IMR-90 (cell line): ENCODE measurements at regions of chr10 and their contacts with region 1.

Region 1: GRCh38 chr10:77641788-77642397 is 4.3 kb upstream of the KCNMA1 start:
- DNase-seq: peak; percentile 83
- ATAC-seq: no peak
- H3K4me3 ChIP-seq: no peak overlapping the region
- H3K27ac ChIP-seq: no peak overlapping the region
- H3K4me1 ChIP-seq: no peaks in the 10 kb centered on the region; the same call in 1 of the 2 replicates
- H3K27me3 ChIP-seq: peaks cover 18% of the 10 kb centered on the region
- CTCF ChIP-seq: peak; percentile 88
- POLR2A ChIP-seq: no peak
- RAD21 ChIP-seq: peak; percentile 93

Region 2: GRCh38 chr10:77173615-77174461 is 468.1 kb before region 1 on chr10:
- CTCF ChIA-PET with region 1: interaction called, 11 read pairs
- POLR2A ChIA-PET with region 1: interaction called, 6 read pairs
- dilution Hi-C with region 1: no loop called
- in situ Hi-C with region 1: loop called (anchors 5 kb)
- intact Hi-C with region 1: loop called (anchors 1 kb)
- DNase-seq: peak; percentile 79
- ATAC-seq: peak; percentile 93
- H3K4me3 ChIP-seq: no peak overlapping the region
- H3K27ac ChIP-seq: no peak overlapping the region
- H3K4me1 ChIP-seq: no peaks in the 10 kb centered on the region; the same call in 1 of the 2 replicates
- H3K27me3 ChIP-seq: no peaks in the 10 kb centered on the region
- CTCF ChIP-seq: peak; percentile 96
- POLR2A ChIP-seq: 0 out of 2 replicates have a peak, but pooled peaks have one; percentile 36
- RAD21 ChIP-seq: peak; percentile 96

Region 3: DNA sequence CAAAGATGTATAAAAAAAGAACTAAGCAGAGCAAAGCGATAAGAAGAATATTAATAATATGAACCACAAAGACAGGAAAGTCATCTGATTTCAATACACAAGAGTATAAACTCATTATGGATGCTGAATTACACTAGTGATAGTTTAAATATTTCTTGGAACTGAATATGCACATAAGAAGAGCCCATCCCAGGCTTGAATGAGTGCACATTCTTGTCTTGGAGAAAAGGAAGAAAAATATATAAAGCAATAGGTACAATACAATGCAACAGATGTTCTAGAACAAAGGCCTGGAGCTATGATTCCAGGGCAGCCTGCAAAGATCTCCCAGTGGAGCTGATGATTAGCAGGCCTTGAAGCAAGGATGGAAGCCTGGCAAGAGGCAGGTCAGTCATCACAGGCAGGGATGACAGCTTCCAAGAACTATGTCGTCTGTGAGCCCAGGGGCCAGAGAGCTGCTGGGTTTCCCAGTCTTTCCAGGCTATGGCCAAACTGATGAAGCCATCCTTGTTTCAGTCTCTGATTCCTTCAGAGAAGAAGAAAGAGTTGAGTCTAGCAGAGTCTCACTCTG is 281.9 kb before region 1 on chr10:
- CTCF ChIA-PET with region 1: no interaction called
- POLR2A ChIA-PET with region 1: no interaction called
- dilution Hi-C with region 1: no loop called
- in situ Hi-C with region 1: no loop called
- intact Hi-C with region 1: no loop called
- DNase-seq: peak; percentile 52
- ATAC-seq: no peak
- H3K4me3 ChIP-seq: no peak overlapping the region
- H3K27ac ChIP-seq: no peak overlapping the region
- H3K4me1 ChIP-seq: peaks cover 14% of the 10 kb centered on the region
- H3K27me3 ChIP-seq: no peaks in the 10 kb centered on the region
- CTCF ChIP-seq: no peak
- POLR2A ChIP-seq: no peak
- RAD21 ChIP-seq: no peak

Region 4: DNA sequence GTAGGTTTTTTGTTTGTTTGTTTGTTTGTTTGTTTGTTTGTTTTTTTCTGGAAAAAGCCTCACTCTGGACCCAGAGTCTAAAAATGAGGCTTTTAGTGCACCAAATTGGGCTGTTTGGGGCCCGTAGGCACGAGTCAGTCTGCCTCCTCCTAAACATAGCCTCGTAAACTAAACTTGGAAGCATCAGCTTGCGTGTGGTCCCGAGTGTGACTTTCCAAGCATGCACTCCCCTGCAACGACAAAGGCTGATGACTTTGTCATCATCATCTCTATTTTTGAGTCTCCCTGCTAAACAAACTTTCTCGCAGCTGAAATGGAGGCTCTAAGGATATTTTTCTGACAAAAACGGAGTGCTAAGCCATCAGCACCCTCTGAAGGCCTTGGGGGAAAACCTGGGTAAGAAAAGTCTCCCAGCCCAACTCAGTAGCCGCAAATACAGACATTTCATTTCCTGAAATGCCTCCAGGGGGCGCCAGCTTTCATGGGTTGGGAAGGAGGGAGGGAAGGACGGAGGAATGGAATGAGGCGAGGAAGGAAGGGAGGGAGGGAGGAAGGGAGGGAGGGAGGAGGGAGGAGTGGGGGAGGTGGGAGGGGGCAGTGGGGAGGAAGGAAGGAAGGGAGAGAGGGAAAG is 250.2 kb before region 1 on chr10:
- CTCF ChIA-PET with region 1: no interaction called
- POLR2A ChIA-PET with region 1: no interaction called
- dilution Hi-C with region 1: no loop called
- in situ Hi-C with region 1: no loop called
- intact Hi-C with region 1: loop called (anchors 1 kb)
- DNase-seq: peak; percentile 87
- ATAC-seq: peak; percentile 61
- H3K4me3 ChIP-seq: no peak overlapping the region
- H3K27ac ChIP-seq: peak overlapping the region; percentile 64
- H3K4me1 ChIP-seq: peaks cover 26% of the 10 kb centered on the region
- H3K27me3 ChIP-seq: no peaks in the 10 kb centered on the region
- CTCF ChIP-seq: peak; percentile 77
- POLR2A ChIP-seq: no peak
- RAD21 ChIP-seq: peak; percentile 77

Region 5: GRCh38 chr10:77467422-77467963 is 174.4 kb before region 1 on chr10:
- CTCF ChIA-PET with region 1: no interaction called
- POLR2A ChIA-PET with region 1: no interaction called
- dilution Hi-C with region 1: no loop called
- in situ Hi-C with region 1: no loop called
- intact Hi-C with region 1: no loop called
- DNase-seq: no peak
- ATAC-seq: no peak
- H3K4me3 ChIP-seq: no peak overlapping the region
- H3K27ac ChIP-seq: no peak overlapping the region
- H3K4me1 ChIP-seq: no peaks in the 10 kb centered on the region
- H3K27me3 ChIP-seq: no peaks in the 10 kb centered on the region
- CTCF ChIP-seq: no peak
- POLR2A ChIP-seq: no peak
- RAD21 ChIP-seq: no peak

Region 6: GRCh38 chr10:77494327-77494726 is 147.6 kb before region 1 on chr10:
- CTCF ChIA-PET with region 1: no interaction called
- POLR2A ChIA-PET with region 1: no interaction called
- dilution Hi-C with region 1: no loop called
- in situ Hi-C with region 1: no loop called
- intact Hi-C with region 1: loop called (anchors 2 kb)
- DNase-seq: peak; percentile 54
- ATAC-seq: 0 out of 2 replicates have a peak, but pooled peaks have one; percentile 36
- H3K4me3 ChIP-seq: no peak overlapping the region
- H3K27ac ChIP-seq: no peak overlapping the region
- H3K4me1 ChIP-seq: peaks cover 7% of the 10 kb centered on the region
- H3K27me3 ChIP-seq: no peaks in the 10 kb centered on the region
- CTCF ChIP-seq: peak; percentile 45
- POLR2A ChIP-seq: no peak
- RAD21 ChIP-seq: peak; percentile 61

Region 7: GRCh38 chr10:77628906-77629730 is 12.8 kb before region 1 on chr10:
- CTCF ChIA-PET with region 1: no interaction called
- POLR2A ChIA-PET with region 1: no interaction called
- dilution Hi-C with region 1: no loop called
- in situ Hi-C with region 1: no loop called
- intact Hi-C with region 1: no loop called
- DNase-seq: peak; percentile 58
- ATAC-seq: peak; percentile 33; the same call in 1 of the 2 replicates
- H3K4me3 ChIP-seq: no peak overlapping the region
- H3K27ac ChIP-seq: no peak overlapping the region
- H3K4me1 ChIP-seq: peaks cover 5% of the 10 kb centered on the region; the same call in 1 of the 2 replicates
- H3K27me3 ChIP-seq: no peaks in the 10 kb centered on the region
- CTCF ChIP-seq: no peak
- POLR2A ChIP-seq: no peak
- RAD21 ChIP-seq: no peak

Region 8: DNA sequence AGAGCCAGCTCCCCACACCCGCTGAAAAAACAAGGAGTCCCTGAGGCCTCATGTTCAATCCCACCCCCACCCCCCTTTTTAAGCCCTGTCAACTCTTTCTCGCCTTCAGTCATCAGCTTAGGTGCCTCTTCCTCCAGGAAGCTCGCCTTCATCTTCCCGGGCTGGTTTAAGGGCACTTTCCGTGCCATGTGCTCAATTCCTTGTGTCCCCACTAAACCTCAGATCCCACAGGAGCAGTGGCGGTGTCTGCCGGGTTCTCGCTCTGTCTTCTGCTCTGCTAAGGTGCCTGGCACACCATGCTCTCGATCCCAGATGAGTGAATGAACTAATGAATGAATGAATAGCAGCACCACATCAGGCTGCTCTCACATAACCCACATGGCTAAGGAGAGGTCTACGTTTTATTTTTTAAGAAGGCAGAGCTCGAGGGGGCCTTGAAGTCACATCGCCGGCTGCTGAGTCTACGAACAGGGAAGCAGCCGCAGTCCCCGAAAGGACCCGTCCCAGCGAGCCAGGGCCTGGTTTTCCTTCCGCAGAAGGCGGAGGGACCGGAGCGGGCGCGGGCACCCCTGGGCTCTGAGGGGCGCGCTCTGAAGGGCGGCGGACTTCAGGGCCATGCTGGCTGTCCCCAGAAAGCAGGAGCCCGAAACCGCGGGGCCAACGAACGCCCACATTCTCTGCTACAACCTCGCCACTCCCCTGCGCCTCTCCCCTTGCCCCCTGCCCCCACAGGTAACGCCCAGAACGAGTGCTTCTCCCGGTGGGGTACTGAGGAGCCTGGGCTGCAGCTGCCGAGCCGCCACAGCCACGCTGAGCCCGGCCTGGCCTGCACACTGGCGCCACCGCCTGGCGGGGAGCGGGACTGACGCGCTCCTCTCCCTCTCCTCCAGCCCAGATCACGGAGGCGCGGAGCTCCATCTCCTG is 69.1 kb after region 1 on chr10:
- CTCF ChIA-PET with region 1: interaction called, 4 read pairs
- POLR2A ChIA-PET with region 1: no interaction called
- dilution Hi-C with region 1: no loop called
- in situ Hi-C with region 1: no loop called
- intact Hi-C with region 1: loop called (anchors 2 kb)
- DNase-seq: peak; percentile 44
- ATAC-seq: peak; percentile 100
- H3K4me3 ChIP-seq: peak overlapping the region; percentile 33
- H3K27ac ChIP-seq: no peak overlapping the region; the same call in 1 of the 2 replicates
- H3K4me1 ChIP-seq: no peaks in the 10 kb centered on the region
- H3K27me3 ChIP-seq: peaks cover 6% of the 10 kb centered on the region; the same call in 1 of the 2 replicates
- CTCF ChIP-seq: peak; percentile 95
- POLR2A ChIP-seq: no peak
- RAD21 ChIP-seq: peak; percentile 87